ENCODE measurements at regions of chr10 and their contacts with region 1.

Region 1: GRCh38 chr10:63083904-63084689 is 49.0 kb upstream of the NRBF2 start:
- DNase-seq: peak; percentile 75
- ATAC-seq: peak; percentile 86
- H3K4me3 ChIP-seq: no peak overlapping the region
- H3K4me3 Mint-ChIP-seq: no peak overlapping the region
- H3K27ac ChIP-seq: no peak overlapping the region
- H3K27ac Mint-ChIP-seq: no peak overlapping the region
- H3K4me1 ChIP-seq: no peaks in the 10 kb centered on the region
- H3K4me1 Mint-ChIP-seq: no peaks in the 10 kb centered on the region
- H3K27me3 ChIP-seq: no peaks in the 10 kb centered on the region
- H3K27me3 Mint-ChIP-seq: peaks cover 10% of the 10 kb centered on the region
- CTCF ChIP-seq: peak; percentile 82

Region 2: DNA sequence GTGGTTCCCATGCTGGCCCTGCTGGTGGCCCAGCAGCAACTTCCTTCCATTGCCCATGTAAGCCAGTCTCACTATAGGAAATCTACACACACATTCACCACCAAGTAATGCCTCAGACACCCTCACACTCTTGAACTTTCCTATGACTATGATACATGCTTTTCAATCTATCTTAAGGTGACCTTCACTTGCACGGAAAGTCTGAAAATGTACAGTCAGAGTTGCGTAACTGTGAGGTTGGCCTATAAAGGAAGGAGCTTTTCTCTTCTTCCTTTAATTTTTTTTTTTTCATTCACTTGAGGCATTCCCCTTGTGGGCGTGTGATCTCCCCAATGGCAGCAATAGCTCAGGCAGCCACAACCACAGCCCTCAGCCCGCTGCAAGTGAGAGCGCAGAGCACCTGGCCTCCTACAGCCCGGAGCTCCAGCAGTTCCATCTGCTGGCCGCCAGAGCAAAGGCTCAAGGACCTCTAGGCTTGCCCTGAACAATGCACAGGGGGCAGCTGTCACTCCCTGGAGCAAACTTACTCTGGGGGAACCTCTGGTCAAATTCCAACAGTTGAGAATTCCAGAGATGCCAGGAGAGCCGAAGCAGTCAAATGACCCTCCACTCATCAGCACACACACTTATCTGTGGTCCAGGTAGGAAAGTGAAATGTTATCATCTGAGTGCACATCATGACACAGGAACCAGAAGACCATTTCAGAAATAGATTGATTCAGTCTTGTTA is 402.7 kb before region 1 on chr10:
- CTCF ChIA-PET with region 1: no interaction called
- POLR2A ChIA-PET with region 1: no interaction called
- intact Hi-C with region 1: loop called (anchors 1 kb)
- DNase-seq: peak; percentile 82
- ATAC-seq: peak; percentile 97
- H3K4me3 ChIP-seq: no peak overlapping the region
- H3K4me3 Mint-ChIP-seq: peak overlapping the region; percentile 21
- H3K27ac ChIP-seq: no peak overlapping the region
- H3K27ac Mint-ChIP-seq: peak overlapping the region; percentile 51
- H3K4me1 ChIP-seq: peaks cover 14 to 17% of the 10 kb centered on the region in 2 donors
- H3K4me1 Mint-ChIP-seq: peaks cover 16% of the 10 kb centered on the region
- H3K27me3 ChIP-seq: no peaks in the 10 kb centered on the region
- H3K27me3 Mint-ChIP-seq: peaks cover 4% of the 10 kb centered on the region
- CTCF ChIP-seq: peak; percentile 53

Region 3: GRCh38 chr10:63206997-63207811 is 123.1 kb after region 1 on chr10:
- CTCF ChIA-PET with region 1: no interaction called
- POLR2A ChIA-PET with region 1: no interaction called
- intact Hi-C with region 1: no loop called
- DNase-seq: no peak
- ATAC-seq: peak; percentile 61
- H3K4me3 ChIP-seq: no peak overlapping the region
- H3K4me3 Mint-ChIP-seq: peak overlapping the region; percentile 64
- H3K27ac ChIP-seq: peak overlapping the region in 1 of 2 donors; percentile 39
- H3K27ac Mint-ChIP-seq: peak overlapping the region; percentile 76
- H3K4me1 ChIP-seq: peaks cover 29 to 30% of the 10 kb centered on the region in 2 donors
- H3K4me1 Mint-ChIP-seq: peaks cover 59% of the 10 kb centered on the region
- H3K27me3 ChIP-seq: no peaks in the 10 kb centered on the region
- H3K27me3 Mint-ChIP-seq: no peaks in the 10 kb centered on the region
- CTCF ChIP-seq: no peak

Region 4: DNA sequence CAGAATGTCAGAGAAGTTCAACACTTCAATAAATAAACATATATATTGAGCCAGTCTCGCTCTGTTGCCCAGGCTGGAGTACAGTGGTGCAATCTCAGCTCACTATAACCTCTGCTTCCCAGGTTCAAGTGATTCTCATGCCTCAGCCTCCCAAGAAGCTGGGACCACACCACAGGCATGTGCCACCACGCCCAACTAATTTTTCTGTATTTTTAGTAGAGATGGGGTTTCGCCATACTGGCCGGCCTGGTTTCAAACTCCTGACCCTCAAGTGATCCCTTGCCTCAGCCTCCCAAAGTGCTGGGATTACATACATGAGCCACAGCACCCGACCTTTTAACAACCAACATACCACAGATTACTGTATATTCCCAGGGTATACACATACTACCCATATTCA is 247.5 kb after region 1 on chr10:
- CTCF ChIA-PET with region 1: no interaction called
- POLR2A ChIA-PET with region 1: no interaction called
- intact Hi-C with region 1: no loop called
- DNase-seq: no peak
- ATAC-seq: no peak
- H3K4me3 ChIP-seq: no peak overlapping the region
- H3K4me3 Mint-ChIP-seq: no peak overlapping the region
- H3K27ac ChIP-seq: no peak overlapping the region
- H3K27ac Mint-ChIP-seq: no peak overlapping the region
- H3K4me1 ChIP-seq: no peaks in the 10 kb centered on the region
- H3K4me1 Mint-ChIP-seq: no peaks in the 10 kb centered on the region
- H3K27me3 ChIP-seq: no peaks in the 10 kb centered on the region
- H3K27me3 Mint-ChIP-seq: no peaks in the 10 kb centered on the region
- CTCF ChIP-seq: no peak

Region 5: DNA sequence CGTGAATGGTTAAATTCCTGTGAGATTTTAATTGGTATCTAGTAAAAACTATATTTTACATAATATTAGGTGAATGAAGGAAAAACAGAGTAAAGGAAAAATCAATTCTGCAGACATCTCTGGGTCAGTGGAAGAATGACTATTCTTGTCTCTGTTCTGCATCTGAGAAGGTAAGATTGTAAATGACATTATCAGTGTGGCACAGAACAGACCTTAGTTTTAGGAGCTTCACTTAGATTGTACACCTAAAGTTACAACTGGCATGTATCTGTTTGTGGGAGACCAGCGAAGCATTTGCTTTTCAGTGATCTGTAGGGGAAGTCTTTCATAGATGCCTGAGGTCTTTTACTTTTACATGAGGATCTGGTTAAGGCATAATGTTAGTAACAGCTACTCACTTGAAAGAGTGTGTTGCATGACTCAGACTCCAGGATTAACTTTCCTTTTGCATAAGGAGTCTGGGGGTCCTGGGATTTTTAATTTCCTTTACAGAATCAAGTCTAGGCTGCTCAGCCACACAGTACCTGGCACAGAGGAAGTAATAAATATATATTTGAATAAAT is 325.4 kb after region 1 on chr10:
- CTCF ChIA-PET with region 1: no interaction called
- POLR2A ChIA-PET with region 1: no interaction called
- intact Hi-C with region 1: no loop called
- DNase-seq: no peak
- ATAC-seq: no peak
- H3K4me3 ChIP-seq: no peak overlapping the region
- H3K4me3 Mint-ChIP-seq: no peak overlapping the region
- H3K27ac ChIP-seq: no peak overlapping the region
- H3K27ac Mint-ChIP-seq: no peak overlapping the region
- H3K4me1 ChIP-seq: peaks cover 6 to 10% of the 10 kb centered on the region in 2 donors
- H3K4me1 Mint-ChIP-seq: peaks cover 18% of the 10 kb centered on the region
- H3K27me3 ChIP-seq: no peaks in the 10 kb centered on the region
- H3K27me3 Mint-ChIP-seq: no peaks in the 10 kb centered on the region
- CTCF ChIP-seq: no peak

Measured in B cell (primary cell).